ENCODE measurements at regions of chr11 and their contacts with region 1.

Region 1: DNA sequence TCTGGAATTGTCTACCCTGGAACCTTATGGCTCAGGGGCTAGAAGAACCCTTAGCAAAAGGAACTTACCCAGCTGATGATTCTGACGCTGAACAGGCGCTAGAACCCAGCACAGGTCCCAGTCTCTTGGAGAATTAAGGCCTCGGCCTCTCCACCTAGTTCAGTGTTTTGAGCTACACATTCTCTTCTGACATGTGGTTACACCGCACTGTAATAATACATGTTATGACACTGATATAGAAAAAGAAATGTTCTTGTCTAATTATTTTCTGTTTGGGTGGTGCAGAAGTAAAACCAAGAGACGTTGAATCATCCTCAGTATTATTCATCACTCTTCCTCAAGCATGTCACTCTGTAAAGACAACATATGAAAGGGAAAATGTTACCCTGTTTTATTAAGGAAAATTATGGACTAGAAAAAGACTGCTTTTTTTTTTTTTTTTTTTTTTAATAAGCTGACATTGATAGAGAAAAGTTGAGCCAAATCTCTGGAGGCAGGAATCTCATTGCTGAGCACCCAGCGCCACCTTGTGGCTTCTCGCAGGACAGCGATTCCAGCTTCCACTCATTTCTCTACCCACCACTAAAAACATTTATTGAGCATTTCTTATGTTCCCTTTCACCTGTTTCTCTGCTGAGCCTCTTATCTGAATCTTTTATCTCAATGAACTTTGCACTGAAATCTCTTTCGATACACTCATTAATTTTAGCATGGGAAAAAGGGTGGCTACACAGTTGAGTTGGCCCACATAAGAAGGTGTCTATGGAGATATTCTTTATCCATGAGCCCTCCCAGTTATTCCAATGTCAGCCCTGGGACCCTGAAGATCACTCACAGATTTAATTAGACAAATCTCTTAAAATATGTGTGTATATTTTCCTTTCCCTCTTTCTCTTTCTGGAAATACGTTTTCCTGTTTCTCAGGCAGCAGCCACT is 12.6 kb upstream of the APLNR start:
- DNase-seq: peak; percentile 62
- H3K4me3 Mint-ChIP-seq: no peak overlapping the region
- H3K27ac Mint-ChIP-seq: no peak overlapping the region
- H3K4me1 Mint-ChIP-seq: peaks cover 10% of the 10 kb centered on the region
- H3K27me3 Mint-ChIP-seq: no peaks in the 10 kb centered on the region
- CTCF ChIP-seq: peak; percentile 93

Region 2: DNA sequence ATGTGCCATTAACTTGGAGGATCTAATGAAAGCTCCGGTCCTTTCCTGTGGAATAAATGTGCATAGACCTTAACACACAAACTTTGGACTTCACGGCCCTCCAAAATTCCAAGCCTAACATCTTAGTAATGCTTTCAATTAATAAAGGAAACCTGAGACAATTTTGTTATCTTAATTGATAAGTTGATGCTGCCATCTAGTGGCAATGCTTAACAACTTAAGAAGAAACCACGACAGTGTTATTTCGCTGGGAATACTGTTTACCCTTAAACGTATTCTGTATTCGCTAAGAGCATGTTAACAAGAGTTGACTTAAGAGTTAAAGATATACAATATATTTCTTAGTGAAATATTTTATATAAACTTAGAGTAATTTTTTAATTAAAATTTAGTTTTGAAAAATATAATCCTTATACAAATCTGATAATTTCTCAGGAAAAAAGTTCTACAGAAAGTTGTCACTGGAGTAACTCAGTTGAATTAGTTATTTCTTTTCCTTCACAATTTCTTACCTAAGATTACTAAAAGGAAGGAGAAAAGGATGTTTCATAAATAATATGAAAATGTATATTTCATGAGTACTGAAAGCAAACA is 466.1 kb before region 1 on chr11:
- CTCF ChIA-PET with region 1: interaction called, 11 read pairs
- POLR2A ChIA-PET with region 1: no interaction called
- intact Hi-C with region 1: no loop called
- DNase-seq: peak; percentile 66
- H3K4me3 Mint-ChIP-seq: no peak overlapping the region
- H3K27ac Mint-ChIP-seq: no peak overlapping the region
- H3K4me1 Mint-ChIP-seq: no peaks in the 10 kb centered on the region
- H3K27me3 Mint-ChIP-seq: no peaks in the 10 kb centered on the region
- CTCF ChIP-seq: peak; percentile 71

Region 3: DNA sequence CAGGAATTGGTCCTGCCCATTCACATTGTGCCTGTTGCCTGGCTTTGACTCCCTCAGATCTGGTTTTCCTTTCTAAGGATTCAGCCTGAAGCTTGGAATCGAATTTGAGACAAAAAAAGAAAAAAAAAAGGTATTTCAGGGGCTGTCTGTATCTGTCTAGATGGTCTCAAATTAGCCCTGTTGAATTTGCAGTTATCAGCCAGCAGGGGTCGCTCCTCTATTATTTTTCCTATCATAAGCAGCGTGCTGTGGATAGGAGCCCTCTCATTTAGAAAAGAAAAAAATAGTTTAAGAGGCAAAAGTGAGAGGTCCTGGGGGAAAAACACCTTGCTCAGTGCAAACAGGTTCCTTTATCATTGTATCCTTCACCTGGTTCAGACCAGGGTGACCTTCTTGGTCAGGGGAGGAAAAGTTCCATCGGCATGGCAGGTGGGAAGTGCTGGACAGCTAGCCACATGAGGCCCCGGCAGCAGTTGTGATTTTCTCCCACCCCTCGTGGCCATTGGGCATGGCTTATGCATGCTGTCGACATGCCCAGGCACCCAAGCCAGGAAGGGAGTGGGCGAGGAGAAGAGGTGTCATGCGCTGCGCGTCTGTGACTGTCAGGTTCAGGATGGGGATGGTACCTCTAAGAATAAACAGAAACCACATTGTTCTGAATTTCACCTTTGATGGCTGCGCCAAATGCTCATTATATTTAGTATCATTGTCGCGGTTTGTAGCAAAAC is 247.8 kb before region 1 on chr11:
- CTCF ChIA-PET with region 1: interaction called, 3 read pairs
- POLR2A ChIA-PET with region 1: no interaction called
- intact Hi-C with region 1: loop called (anchors 2 kb)
- DNase-seq: peak; percentile 11
- H3K4me3 Mint-ChIP-seq: no peak overlapping the region
- H3K27ac Mint-ChIP-seq: no peak overlapping the region
- H3K4me1 Mint-ChIP-seq: no peaks in the 10 kb centered on the region
- H3K27me3 Mint-ChIP-seq: no peaks in the 10 kb centered on the region
- CTCF ChIP-seq: peak; percentile 42

Region 4: DNA sequence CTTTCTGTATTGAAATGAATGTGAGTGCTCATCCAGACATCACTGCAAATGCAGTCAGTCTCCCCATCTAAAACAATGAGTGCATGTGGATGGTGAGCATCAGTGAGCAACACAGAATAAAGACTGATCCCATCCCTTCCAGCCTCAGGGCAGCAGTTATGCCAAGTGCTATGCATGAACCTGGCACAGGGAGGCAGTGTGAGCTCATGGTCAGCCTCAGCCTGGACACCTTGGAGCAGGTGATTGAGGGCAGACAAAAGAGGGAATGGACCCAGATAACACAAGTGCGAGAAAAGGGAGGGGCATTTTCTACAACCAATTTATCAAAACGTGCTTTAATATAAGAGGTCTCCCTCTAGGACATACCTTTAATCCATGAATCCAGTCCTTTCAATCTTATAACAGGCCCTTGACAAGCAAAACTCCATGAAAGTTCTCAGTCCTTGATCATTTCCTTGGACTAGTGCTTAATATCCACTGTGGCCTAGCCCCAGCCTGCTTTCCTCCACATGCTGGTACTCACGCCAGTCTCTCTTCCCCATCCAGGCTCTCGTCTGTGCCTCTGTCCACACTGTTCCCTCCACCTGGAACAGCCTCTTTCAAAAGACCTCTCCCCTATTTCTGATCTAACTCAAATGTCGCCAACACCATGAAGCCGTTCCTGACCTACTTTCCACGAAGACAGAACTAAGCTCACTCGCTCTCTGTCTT is 118.4 kb before region 1 on chr11:
- CTCF ChIA-PET with region 1: interaction called, 324 read pairs
- POLR2A ChIA-PET with region 1: interaction called, 4 read pairs
- intact Hi-C with region 1: loop called (anchors 1 kb)
- DNase-seq: peak; percentile 57
- H3K4me3 Mint-ChIP-seq: no peak overlapping the region
- H3K27ac Mint-ChIP-seq: no peak overlapping the region
- H3K4me1 Mint-ChIP-seq: peaks cover 11% of the 10 kb centered on the region
- H3K27me3 Mint-ChIP-seq: no peaks in the 10 kb centered on the region
- CTCF ChIP-seq: peak; percentile 58

Region 5: DNA sequence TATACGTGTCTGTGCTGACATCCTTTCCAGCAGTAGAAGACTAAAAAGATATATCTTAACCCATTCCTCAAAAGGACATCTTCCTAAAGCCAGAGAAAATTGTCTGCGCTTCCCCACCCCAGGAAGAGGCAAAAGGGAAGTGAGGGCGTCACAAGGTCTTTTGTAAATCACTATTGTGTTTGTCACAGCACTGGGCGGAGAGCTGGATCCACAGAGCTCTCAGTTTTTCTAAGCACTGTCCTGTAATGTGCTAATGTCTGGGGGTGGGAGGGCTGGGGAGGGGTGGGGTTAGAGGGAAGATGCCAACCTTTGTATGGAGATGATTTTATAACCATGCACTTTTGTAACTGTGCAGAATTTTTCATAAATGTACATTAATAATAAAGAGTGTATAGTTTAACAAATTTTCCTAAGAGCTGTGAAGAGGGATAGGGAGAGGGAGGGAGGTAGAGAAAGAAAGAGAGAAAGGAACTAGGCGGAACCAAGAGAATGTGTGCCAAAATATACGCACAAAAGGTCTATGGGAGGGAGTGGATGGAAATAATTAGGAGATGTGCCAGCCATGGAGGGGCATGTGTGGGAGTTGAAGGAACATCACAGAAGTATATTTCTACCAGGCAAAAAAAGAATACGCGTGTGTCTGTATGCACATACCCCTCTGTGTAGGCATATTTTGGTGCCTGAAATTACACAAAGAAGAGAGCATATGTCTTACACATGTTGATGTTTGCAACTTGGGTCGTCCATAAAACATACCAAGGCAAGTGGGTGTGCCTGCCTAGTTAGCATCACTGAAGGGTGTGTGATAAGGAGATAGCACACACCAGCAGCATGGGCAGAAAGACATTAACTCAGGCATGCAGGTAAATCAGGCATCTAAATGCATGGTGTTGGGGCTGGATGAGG is 58.1 kb before region 1 on chr11:
- CTCF ChIA-PET with region 1: interaction called, 10 read pairs
- POLR2A ChIA-PET with region 1: no interaction called
- intact Hi-C with region 1: no loop called
- DNase-seq: no peak
- H3K4me3 Mint-ChIP-seq: no peak overlapping the region
- H3K27ac Mint-ChIP-seq: no peak overlapping the region
- H3K4me1 Mint-ChIP-seq: no peaks in the 10 kb centered on the region
- H3K27me3 Mint-ChIP-seq: no peaks in the 10 kb centered on the region
- CTCF ChIP-seq: no peak

Region 6: GRCh38 chr11:57260937-57261783 is 11.5 kb after region 1 on chr11:
- CTCF ChIA-PET with region 1: interaction called, 23 read pairs
- POLR2A ChIA-PET with region 1: no interaction called
- intact Hi-C with region 1: no loop called
- DNase-seq: no peak
- H3K4me3 Mint-ChIP-seq: no peak overlapping the region
- H3K27ac Mint-ChIP-seq: no peak overlapping the region
- H3K4me1 Mint-ChIP-seq: no peaks in the 10 kb centered on the region
- H3K27me3 Mint-ChIP-seq: no peaks in the 10 kb centered on the region
- CTCF ChIP-seq: no peak

Region 7: DNA sequence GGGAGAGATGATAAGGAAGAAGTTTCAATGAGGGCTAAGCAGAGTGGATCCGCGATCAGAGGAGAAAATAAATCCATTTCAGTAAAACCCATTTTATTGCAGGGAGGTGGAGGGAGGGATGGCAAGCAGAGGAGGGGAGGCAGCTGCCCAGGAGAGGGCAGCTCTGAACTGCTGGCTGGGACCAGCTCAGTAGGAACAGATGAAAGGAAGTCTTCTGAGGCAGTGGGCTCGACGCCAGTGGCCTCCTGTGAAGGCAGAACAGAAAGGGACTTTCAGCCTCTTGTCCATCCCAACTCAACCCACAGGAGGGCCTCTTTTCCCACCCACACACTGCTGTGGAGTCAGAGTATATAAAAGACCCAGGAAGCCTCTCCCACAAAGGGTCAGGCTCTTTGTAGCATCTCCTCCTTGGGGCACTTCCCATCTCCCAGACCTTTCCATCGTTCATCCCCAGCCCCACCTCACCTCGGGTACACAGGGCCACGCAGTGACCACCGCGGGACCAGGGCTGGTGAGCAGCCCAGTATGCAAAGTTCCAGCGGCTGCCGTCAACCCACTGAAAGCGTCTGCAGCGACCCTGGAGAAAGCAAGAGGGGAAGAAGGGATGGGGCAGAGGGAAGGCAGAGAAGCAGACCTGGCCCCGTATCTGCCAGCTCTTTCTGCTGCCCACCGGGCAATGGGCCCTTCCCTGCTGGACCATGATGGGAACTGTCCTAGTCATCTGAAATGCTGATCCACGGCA is 137.8 kb after region 1 on chr11:
- CTCF ChIA-PET with region 1: no interaction called
- POLR2A ChIA-PET with region 1: no interaction called
- intact Hi-C with region 1: no loop called
- DNase-seq: no peak
- H3K4me3 Mint-ChIP-seq: no peak overlapping the region
- H3K27ac Mint-ChIP-seq: no peak overlapping the region
- H3K4me1 Mint-ChIP-seq: no peaks in the 10 kb centered on the region
- H3K27me3 Mint-ChIP-seq: peaks cover 83% of the 10 kb centered on the region
- CTCF ChIP-seq: no peak